CD4-positive, alpha-beta memory T cell (primary cell): ENCODE measurements at regions of chr9 and their contacts with region 1.

Region 1: DNA sequence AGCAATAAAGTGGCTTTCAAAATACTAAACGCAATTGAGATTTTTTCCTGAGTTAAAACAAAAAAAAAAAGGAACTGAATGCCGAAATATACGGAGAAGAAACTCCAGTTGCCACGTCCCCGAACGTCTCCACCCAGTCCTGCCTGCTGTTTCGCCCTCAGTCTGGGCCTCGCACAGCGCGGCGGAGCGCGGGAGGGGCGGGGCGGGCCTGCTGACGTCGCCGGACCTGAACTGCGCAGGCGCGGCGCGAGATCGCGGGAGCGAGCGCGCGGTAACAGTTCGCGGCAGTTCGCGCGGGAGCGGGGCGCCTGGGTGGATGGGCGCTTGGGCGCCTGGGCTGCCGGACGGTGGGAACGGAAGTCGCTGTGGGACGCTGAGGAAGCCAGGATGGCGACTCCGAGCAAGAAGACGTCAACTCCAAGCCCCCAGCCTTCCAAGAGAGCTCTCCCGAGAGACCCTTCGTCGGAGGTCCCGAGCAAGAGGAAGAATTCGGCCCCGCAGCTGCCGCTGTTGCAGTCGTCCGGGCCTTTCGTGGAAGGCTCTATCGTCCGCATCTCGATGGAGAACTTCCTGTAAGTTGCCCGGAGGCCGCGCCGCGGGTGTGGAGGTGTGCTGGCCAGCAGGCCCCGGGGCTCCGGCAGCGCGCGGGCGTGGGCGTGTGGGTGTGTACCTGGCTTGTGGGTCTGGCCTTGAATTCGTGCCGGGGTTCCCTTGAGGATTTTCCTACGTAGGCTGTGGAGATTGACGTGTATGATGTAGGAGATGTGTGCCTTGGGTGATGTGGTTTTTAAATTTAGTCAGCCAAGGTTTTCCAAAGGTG is at the start of gene SMC5:
- DNase-seq: peak; percentile 85 to 93 (median 92)
- H3K4me3 ChIP-seq: peak within 1 kb of the TSS; percentile 62 to 66
- H3K4me3 Mint-ChIP-seq: peak within 1 kb of the TSS; percentile 89 to 99 (median 96)
- H3K27ac ChIP-seq: peak within 1 kb of the TSS; percentile 95
- H3K27ac Mint-ChIP-seq: peak within 1 kb of the TSS; percentile 91 to 99 (median 97)
- H3K4me1 ChIP-seq: peaks cover 55% of the 10 kb centered on the region
- H3K4me1 Mint-ChIP-seq: peaks cover 44 to 65% (median 51%) of the 10 kb centered on the region in 4 donors
- H3K27me3 ChIP-seq: no peaks in the 10 kb centered on the region
- H3K27me3 Mint-ChIP-seq: no peaks in the 10 kb centered on the region
- total RNA-seq, gene SMC5: 43.7 to 48.3 TPM

Region 2: GRCh38 chr9:70297141-70297540 is 38.2 kb after region 1 on chr9:
- CTCF ChIA-PET with region 1: no interaction called
- POLR2A ChIA-PET with region 1: no interaction called
- intact Hi-C with region 1: loop called (anchors 5 kb)
- DNase-seq: no peak
- H3K4me3 ChIP-seq: no peak overlapping the region
- H3K4me3 Mint-ChIP-seq: no peak overlapping the region
- H3K27ac ChIP-seq: no peak overlapping the region
- H3K27ac Mint-ChIP-seq: no peak overlapping the region
- H3K4me1 ChIP-seq: peaks cover 11% of the 10 kb centered on the region
- H3K4me1 Mint-ChIP-seq: peaks cover 11 to 28% (median 21%) of the 10 kb centered on the region in 4 donors
- H3K27me3 ChIP-seq: no peaks in the 10 kb centered on the region
- H3K27me3 Mint-ChIP-seq: no peaks in the 10 kb centered on the region